Naive thymus-derived CD4-positive, alpha-beta T cell (primary cell): ENCODE measurements at regions of chr9 and their contacts with region 1.

Region 1: DNA sequence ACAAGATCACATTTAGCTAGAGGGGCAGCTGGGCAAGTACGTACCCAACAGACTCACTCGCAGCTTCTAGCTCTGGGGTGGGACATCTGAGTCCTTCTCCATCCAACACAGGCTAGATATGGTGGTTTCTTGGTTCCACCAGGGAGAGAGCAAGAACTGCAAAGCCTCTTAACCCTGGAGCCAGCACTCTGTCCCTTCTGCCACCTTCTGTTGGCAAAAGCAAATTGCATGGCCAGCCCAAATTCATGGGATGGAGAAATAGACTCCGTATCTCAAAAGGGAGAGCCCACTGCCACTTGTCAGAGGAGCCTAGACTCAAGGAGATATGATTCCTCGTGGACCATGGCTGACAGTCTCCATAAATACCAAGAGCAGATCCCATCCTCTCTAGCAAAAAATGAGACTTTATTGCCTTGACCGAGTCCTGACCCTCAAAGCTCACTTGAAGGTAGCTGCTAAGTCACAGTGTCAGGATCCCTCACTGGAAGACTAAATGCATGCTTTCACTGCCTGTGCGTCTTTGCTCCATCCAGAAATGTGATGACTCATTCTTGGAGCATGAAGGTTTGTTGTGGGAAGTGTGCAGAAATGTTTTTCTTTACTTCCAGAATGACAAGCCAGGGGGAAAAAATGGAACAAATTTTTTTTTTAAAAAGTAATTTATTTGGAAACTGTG is 28.8 kb upstream of the ROR2 start:
- DNase-seq: no peak
- ATAC-seq: no peak
- H3K4me3 ChIP-seq: no peak overlapping the region
- H3K4me3 Mint-ChIP-seq: no peak overlapping the region
- H3K27ac ChIP-seq: no peak overlapping the region
- H3K27ac Mint-ChIP-seq: no peak overlapping the region
- H3K4me1 ChIP-seq: no peaks in the 10 kb centered on the region
- H3K4me1 Mint-ChIP-seq: no peaks in the 10 kb centered on the region
- H3K27me3 ChIP-seq: no peaks in the 10 kb centered on the region
- H3K27me3 Mint-ChIP-seq: peaks cover under 1 to 15% (median 12%) of the 10 kb centered on the region in 5 donors

Region 2: GRCh38 chr9:91775011-91775707 is 203.7 kb before region 1 on chr9:
- CTCF ChIA-PET with region 1: no interaction called
- POLR2A ChIA-PET with region 1: no interaction called
- intact Hi-C with region 1: loop called in 1 of 2 experiments (anchors 1 kb)
- DNase-seq: peak in 7 of 9 donors; percentile 16 to 65 (median 33)
- ATAC-seq: peak; percentile 63
- H3K4me3 ChIP-seq: no peak overlapping the region
- H3K4me3 Mint-ChIP-seq: no peak overlapping the region
- H3K27ac ChIP-seq: no peak overlapping the region
- H3K27ac Mint-ChIP-seq: no peak overlapping the region
- H3K4me1 ChIP-seq: peaks cover 0 to 4% of the 10 kb centered on the region in 2 donors
- H3K4me1 Mint-ChIP-seq: peaks cover 0 to 4% (median 0%) of the 10 kb centered on the region in 7 donors
- H3K27me3 ChIP-seq: peaks cover 0 to 4% of the 10 kb centered on the region in 2 donors
- H3K27me3 Mint-ChIP-seq: peaks cover 16 to 32% (median 29%) of the 10 kb centered on the region in 5 donors

Region 3: DNA sequence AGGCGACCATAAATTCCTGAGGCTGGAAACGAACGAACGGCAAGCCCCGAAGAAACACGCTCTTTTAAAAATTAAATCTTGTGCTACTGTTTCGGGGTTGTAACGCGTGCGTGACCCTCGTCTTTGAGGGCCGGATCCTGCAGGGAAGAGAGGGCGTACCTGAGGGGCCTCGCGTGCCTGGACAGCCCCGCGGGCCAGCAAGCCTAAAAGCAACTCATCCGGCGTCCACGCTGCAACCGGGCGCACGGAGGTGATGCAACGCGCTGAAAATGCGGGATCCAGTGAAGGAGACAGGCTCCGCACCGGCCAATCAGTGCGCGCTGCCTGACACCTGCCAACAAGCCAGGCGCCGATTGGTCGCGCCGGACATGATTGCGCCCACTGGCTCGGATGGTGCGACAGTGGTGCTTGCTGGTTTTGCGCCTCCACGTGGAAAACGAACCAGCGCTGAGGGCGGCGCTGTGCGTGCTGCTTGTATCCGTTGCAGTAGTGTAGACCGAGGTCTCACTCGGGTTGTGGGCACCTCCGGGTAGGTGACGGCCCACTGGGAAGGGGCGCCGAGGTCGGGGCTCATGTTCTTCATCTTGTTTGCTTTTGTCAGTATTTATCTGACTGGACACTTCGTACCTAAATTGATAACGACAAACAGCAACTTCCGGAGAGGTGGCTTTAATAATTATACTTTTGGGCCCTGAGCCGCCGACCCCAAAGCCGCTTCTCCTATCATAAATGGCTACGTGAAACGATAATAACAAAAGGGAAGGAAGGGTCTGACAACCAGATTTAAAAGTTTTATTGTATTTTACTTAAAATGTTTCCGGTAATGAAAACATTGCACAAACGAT is 314.8 kb after region 1 on chr9 and contains the start of gene IARS1:
- CTCF ChIA-PET with region 1: no interaction called
- POLR2A ChIA-PET with region 1: no interaction called
- intact Hi-C with region 1: no loop called
- DNase-seq: peak; percentile 97 to 100 (median 100)
- ATAC-seq: peak; percentile 98
- H3K4me3 ChIP-seq: peak within 1 kb of the TSS; percentile 61
- H3K4me3 Mint-ChIP-seq: peak within 1 kb of the TSS; percentile 85 to 99 (median 98)
- H3K27ac ChIP-seq: peak within 1 kb of the TSS; percentile 78
- H3K27ac Mint-ChIP-seq: peak within 1 kb of the TSS; percentile 95 to 100 (median 98)
- H3K4me1 ChIP-seq: peaks cover 17 to 33% of the 10 kb centered on the region in 2 donors
- H3K4me1 Mint-ChIP-seq: peaks cover 23 to 68% (median 62%) of the 10 kb centered on the region in 7 donors
- H3K27me3 ChIP-seq: no peaks in the 10 kb centered on the region
- H3K27me3 Mint-ChIP-seq: no peaks in the 10 kb centered on the region
- total RNA-seq, gene IARS1: 52.4 to 145 (median 97.7) TPM

Region 4: DNA sequence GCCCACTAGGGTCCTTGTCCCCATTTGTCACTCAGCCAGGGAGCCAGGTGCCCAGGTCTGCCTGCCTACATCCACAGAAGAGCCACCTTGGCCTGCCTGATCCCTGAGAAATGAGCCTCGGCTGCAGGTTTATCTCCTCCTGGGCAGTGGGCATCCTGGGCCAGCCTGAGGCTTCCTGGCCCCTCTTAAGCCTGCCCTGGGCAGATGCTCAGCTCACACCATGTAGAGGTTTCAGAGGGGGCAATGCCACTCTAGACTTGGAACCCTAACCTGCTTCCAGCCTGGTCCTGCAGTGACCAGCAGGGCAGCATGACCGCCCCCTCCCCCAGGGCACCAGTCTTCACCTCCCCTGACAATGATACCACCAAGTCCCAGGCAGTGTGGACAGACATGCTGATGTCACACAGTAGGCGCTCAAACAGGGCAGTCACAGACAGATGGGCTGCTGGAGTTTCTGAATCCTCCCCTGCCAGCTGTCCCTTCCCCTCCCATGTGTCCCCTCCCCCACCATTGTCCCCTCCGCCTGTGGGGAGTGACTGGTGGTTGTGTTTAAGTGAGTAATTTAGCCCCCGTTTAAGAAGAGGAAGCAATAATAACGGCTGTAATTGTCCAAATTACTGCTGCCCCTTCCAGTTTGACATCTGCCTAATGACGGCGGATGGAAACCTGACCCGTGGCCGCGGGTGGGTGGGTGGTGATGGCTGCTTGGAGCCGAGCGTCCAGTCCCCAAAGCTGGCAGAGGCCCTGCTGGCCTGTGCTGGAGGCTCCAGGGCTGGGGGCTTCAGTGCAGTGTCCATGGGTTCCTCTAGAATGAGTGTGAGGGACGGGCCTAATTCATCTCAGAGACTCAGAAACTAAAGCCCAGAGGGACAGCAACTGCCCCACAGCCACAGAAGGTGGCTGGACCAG is 1828.5 kb after region 1 on chr9:
- CTCF ChIA-PET with region 1: no interaction called
- POLR2A ChIA-PET with region 1: no interaction called
- intact Hi-C with region 1: no loop called
- DNase-seq: no peak
- ATAC-seq: no peak
- H3K4me3 ChIP-seq: no peak overlapping the region
- H3K4me3 Mint-ChIP-seq: no peak overlapping the region
- H3K27ac ChIP-seq: no peak overlapping the region
- H3K27ac Mint-ChIP-seq: no peak overlapping the region
- H3K4me1 ChIP-seq: no peaks in the 10 kb centered on the region
- H3K4me1 Mint-ChIP-seq: no peaks in the 10 kb centered on the region
- H3K27me3 ChIP-seq: no peaks in the 10 kb centered on the region
- H3K27me3 Mint-ChIP-seq: peaks cover 0 to 17% (median 5%) of the 10 kb centered on the region in 5 donors